ENCODE measurements at regions of chr16 and their contacts with region 1.

Region 1: DNA sequence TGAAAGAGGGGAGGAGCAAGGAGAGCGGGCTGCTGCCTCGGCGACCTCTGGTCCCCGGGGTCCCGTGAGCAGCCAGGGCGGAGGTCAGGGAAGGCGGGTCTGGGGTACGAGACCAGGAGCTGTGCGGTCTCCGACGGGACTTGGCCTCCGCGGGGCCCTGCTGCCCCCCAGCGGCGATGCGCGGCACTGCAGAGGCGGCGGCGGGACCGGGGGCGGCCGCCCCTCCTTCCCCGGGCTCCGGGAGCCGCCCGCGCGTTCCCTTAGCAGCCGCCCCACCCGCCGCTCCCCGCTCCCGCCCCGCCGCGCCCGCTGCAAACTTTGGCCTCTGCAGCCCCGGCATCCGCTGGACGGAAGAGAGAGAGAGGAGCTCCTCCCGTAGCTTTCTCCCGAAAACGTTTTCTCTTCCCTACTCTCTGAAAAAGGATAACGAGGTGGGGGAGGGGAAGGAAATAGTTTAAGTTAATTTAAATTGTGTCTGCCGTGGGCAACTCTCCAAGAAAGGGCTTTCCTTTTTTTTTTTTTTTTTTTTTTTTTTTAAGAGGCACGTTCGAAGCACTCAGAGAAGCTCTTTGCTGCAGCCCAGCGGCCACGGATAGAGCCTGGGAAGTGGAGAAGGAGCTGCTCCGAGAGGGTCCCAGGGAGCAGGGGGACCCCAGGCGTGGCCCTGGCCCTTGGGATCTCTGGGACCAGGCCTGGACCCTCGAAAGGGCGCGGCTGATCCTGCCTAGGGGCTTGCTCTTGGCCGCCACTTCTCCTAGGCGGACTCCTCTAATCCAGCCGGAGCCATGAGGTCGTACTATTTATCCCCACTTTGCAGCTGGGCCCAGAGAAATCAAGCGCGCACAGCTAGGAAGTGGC is 43.2 kb downstream of the C16orf82 start:
- DNase-seq: peak; percentile 53
- H3K4me3 ChIP-seq: peak overlapping the region; percentile 23 to 35 (median 34)
- H3K27ac ChIP-seq: no peak overlapping the region
- H3K4me1 ChIP-seq: no peaks in the 10 kb centered on the region
- H3K27me3 ChIP-seq: no peaks in the 10 kb centered on the region
- CTCF ChIP-seq: peak; percentile 46 to 76

Region 2: DNA sequence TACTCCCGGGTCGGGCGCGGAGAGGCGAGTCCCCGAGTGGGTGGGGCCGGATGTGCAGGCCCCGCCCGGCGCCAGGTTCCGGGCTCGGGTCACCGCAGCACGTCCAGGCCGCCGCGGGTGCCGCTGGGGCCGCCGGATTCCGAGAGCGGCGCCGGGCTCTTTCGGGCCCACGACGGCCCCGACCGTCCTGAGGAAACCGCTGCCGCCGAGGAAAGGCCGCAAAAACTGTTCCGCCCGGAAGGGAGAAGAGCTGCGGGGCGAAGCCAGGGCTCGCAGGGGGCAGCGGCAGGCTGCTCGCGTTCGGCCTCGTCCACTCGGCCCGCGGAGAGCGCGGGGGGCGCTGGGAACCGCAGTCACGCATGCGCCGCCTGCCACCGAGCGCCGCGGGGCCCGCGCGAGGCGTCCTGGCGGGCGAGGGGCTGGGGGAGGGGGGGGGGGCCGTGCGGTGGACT is 1852.4 kb before region 1 on chr16 and contains the start of gene ZKSCAN2:
- CTCF ChIA-PET with region 1: no interaction called
- dilution Hi-C with region 1: no loop called
- in situ Hi-C with region 1: loop called in 1 of 2 experiments (anchors 25 kb)
- intact Hi-C with region 1: no loop called
- DNase-seq: peak; percentile 92
- H3K4me3 ChIP-seq: peak within 1 kb of the TSS; percentile 81 to 88 (median 85)
- H3K27ac ChIP-seq: peak within 1 kb of the TSS; percentile 75
- H3K4me1 ChIP-seq: peaks cover 15% of the 10 kb centered on the region
- H3K27me3 ChIP-seq: no peaks in the 10 kb centered on the region
- CTCF ChIP-seq: no peak
- total RNA-seq, gene ZKSCAN2: 6.2 to 6.4 TPM

Region 3: DNA sequence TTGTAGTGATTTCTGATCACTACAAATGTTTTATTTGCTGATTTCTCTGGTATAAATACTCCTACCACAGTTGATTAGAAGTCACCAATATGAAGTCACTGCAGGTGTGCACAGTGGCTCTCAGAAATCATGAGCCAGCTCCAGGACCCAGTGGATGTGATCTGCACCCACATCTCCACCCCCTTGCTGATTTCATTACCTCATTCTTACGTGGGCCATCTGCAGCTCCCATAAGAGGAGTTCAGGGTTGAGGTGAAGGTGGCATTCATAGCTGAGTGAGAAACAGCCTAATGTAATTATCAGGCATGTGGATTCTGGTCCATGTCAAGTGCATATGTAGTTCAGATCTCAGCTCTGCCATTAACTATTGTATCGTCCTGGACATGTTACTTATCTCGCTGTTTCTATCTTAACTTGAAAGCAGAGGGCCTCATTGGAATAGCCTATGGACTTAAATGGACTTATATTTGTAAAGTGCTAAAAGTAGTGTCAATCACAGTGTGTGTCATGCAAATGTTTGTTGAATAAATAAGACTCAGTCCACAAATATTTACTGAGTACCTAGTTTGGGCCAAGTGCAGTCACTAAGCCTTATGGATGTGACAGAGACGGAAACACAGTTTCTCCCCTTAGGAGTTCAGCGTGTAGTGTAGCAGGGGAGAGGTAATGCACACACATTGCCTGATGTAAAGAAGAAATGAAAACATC is 1811.6 kb before region 1 on chr16:
- CTCF ChIA-PET with region 1: no interaction called
- dilution Hi-C with region 1: no loop called
- in situ Hi-C with region 1: loop called in 1 of 2 experiments (anchors 25 kb)
- intact Hi-C with region 1: no loop called
- DNase-seq: no peak
- H3K4me3 ChIP-seq: no peak overlapping the region
- H3K27ac ChIP-seq: no peak overlapping the region
- H3K4me1 ChIP-seq: no peaks in the 10 kb centered on the region
- H3K27me3 ChIP-seq: no peaks in the 10 kb centered on the region
- CTCF ChIP-seq: no peak

Region 4: DNA sequence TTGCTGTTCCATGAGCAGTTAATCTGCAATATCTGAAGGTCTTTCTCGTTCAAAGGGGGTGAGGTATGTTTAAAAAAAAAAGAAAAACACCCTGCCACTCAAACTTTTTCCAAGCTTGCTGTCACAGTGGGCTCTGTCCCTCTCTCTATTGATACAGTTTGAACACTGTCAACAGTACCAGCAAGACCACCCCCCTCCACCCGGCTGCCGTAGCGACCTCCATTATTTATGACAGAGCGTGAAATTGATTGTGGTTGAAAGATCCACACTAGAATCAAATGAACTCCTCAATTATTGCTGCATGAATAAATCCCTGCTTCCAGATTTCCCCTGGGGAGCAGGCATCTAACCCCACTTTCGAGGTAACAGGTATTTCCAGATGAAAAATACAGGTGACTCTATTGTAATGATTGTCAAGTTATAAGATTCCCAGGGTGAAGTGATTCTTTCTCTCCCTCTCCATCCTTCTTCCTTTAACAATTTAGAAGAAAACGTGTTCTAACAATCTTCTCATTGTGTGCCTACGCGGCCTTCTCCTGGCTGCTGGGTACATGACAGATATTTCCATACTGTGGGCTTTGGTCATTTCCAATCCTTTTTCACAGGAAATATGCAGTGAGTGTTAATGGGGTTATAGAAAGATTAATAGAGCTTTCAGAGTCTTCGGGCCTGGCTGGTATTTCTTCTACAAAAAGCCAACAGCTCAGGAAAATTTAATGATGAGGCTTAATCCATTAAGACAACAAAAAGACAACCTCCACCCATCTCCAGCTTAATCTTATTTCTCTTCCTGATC is 178.9 kb before region 1 on chr16:
- CTCF ChIA-PET with region 1: no interaction called
- dilution Hi-C with region 1: no loop called
- in situ Hi-C with region 1: no loop called
- intact Hi-C with region 1: no loop called
- DNase-seq: no peak
- H3K4me3 ChIP-seq: no peak overlapping the region
- H3K27ac ChIP-seq: no peak overlapping the region
- H3K4me1 ChIP-seq: no peaks in the 10 kb centered on the region
- H3K27me3 ChIP-seq: no peaks in the 10 kb centered on the region
- CTCF ChIP-seq: no peak

Region 5: GRCh38 chr16:27097800-27098230 is 12.1 kb before region 1 on chr16:
- CTCF ChIA-PET with region 1: interaction called, 11 read pairs
- dilution Hi-C with region 1: no loop called
- in situ Hi-C with region 1: no loop called
- intact Hi-C with region 1: no loop called
- DNase-seq: no peak
- H3K4me3 ChIP-seq: no peak overlapping the region
- H3K27ac ChIP-seq: no peak overlapping the region
- H3K4me1 ChIP-seq: no peaks in the 10 kb centered on the region
- H3K27me3 ChIP-seq: no peaks in the 10 kb centered on the region
- CTCF ChIP-seq: no peak

Region 6: GRCh38 chr16:27164352-27164751 is 54.5 kb after region 1 on chr16:
- CTCF ChIA-PET with region 1: no interaction called
- dilution Hi-C with region 1: no loop called
- in situ Hi-C with region 1: no loop called
- intact Hi-C with region 1: no loop called
- DNase-seq: no peak
- H3K4me3 ChIP-seq: no peak overlapping the region
- H3K27ac ChIP-seq: no peak overlapping the region
- H3K4me1 ChIP-seq: no peaks in the 10 kb centered on the region
- H3K27me3 ChIP-seq: no peaks in the 10 kb centered on the region
- CTCF ChIP-seq: no peak

Region 7: DNA sequence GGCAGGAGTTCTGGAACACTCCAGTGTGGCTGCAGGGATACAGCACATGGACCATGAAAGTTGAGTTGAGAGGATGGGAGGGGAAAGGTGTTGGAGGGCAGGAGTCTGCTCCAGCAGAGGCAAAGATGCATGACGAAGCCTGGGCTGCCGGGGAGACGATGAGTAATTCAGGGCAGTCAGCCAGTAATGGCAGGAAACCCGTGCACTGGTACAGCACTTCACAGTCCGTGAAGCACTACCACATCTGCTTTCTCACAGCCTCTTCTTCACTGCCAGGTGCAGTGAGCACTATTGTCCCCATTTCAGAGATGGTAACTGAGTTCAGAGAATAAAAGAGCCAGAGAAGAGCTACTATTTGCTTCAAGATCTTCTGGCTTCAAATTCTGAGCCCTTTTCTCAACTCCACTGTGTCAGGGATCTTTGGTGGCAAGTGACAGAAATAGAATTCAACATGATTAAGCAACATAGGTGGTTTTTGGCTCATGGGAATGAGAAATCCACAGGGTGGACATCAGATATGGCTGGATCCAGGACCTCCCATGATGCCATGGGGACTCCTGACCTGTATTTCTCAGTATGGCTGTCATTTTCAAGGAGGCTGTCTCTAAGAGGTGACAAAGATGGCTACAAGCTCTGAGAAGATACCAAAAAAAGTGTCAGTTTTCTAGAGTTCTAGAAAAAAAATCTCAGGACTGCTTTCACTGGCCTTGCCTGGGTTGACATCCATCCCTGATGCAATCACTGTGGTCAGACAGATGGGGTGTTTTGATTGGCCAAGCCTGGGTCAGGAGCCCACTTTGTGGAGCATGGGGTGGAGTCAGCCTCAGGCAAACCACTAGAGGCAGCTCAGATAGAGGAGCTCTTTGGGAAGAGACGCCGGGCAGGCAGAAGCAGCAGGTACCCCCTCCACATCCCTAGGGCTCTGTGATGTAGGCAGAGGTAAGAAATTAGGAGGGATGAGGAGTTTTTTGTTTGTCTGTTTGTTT is 316.8 kb after region 1 on chr16:
- CTCF ChIA-PET with region 1: interaction called, 14 read pairs
- dilution Hi-C with region 1: no loop called
- in situ Hi-C with region 1: no loop called
- intact Hi-C with region 1: no loop called
- DNase-seq: peak; percentile 92
- H3K4me3 ChIP-seq: peak overlapping the region in 1 of 3 experiments; percentile 21
- H3K27ac ChIP-seq: peak overlapping the region; percentile 13
- H3K4me1 ChIP-seq: peaks cover 12% of the 10 kb centered on the region
- H3K27me3 ChIP-seq: no peaks in the 10 kb centered on the region
- CTCF ChIP-seq: no peak

Measured in mammary epithelial cell (primary cell).